ENCODE measurements at regions of chr18 and their contacts with region 1.

Region 1: GRCh38 chr18:9474983-9475642 is at the start of gene RALBP1:
- DNase-seq: peak; percentile 100
- ATAC-seq: peak; percentile 99
- total RNA-seq, gene RALBP1: 48.7 TPM

Region 2: DNA sequence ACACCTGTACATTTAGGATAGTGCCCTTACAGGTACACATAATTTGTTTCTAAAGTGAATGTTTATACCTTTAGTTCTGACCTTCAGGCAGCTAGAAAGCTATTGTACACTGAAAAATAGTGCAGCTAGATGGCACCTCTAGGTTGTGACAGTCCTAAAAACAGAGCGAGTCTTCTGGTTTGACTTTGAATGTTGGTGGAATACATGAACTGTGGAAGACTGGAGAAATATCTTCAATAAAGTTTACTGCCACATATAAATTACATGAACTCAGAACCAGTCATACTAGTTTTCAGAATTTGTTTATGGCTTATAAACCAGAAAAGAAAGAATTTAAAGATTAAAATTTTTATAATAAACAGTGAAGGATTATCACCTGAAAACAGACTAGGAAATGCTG is 199.2 kb before region 1 on chr18:
- intact Hi-C with region 1: loop called (anchors 10 kb)
- DNase-seq: no peak
- ATAC-seq: no peak

Region 3: DNA sequence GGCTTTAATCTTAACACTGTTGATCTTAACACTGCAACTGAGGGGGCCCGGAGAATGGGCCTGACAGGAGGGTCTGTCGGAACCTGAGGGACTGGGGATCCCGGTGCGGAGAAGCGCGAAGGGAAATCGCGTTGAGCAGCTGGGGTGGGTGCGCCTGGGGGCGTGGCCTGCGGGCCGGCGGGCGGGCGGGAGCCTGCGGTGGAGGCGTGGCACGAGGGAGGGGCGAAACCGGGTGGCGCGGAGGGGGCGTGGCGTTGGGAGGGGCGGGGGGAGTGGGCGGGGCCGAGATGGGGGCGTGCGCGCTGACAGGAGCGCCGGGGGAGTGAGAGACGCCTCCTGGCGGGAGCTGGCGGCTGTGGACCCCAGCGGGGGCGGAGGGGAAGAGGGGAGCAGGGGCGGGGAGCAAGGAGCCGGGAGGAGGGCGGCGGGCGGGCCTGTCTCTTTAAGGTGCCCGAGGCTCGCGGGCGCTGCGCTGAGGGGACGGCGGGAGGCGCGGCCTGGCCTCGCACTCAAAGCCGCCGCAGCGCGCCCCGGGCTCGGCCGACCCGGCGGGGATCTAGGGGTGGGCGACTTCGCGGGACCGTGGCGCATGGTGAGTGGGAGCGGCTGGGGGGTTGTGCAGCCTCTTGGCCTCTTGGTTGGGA is 140.7 kb before region 1 on chr18 and contains the start of gene TWSG1:
- intact Hi-C with region 1: loop called (anchors 2 kb)
- DNase-seq: peak; percentile 97
- ATAC-seq: peak; percentile 99
- total RNA-seq, gene TWSG1: 9.8 TPM

Region 4: GRCh38 chr18:9516437-9517064 is 41.4 kb after region 1 on chr18:
- intact Hi-C with region 1: loop called (anchors 5 kb)
- DNase-seq: no peak
- ATAC-seq: no peak

Region 5: GRCh38 chr18:9719421-9719981 is 244.4 kb after region 1 on chr18:
- intact Hi-C with region 1: no loop called
- DNase-seq: no peak
- ATAC-seq: no peak